GM10248 (cell line): ENCODE measurements at regions of chr12 and their contacts with region 1.

Region 1: DNA sequence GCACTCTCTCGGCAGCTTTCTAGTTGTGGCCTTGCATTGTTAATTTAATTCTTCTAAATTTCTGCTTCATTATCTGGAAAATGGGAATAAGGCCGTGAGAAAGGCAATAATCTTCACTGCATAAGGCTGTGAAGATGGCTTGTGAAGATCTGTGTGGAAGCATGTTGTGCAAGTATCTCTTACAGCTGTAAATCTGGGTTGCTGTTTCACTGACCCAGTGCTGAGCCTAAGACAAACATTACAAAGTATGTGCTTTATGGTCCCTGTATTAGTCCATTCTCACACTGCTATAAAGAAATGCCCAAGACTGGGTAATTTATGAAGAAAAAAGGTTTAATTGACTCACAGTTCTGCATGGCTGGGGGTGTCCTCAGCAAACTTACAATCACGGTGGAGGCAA is 101.0 kb upstream of the PTPRR start:
- DNase-seq: no peak
- CTCF ChIP-seq: no peak

Region 2: GRCh38 chr12:71032933-71033332 is 11.4 kb after region 1 on chr12:
- CTCF ChIA-PET with region 1: interaction called, 11 read pairs
- POLR2A ChIA-PET with region 1: no interaction called
- DNase-seq: no peak
- CTCF ChIP-seq: no peak